ENCODE measurements at regions of chr2 and their contacts with region 1.

Region 1: DNA sequence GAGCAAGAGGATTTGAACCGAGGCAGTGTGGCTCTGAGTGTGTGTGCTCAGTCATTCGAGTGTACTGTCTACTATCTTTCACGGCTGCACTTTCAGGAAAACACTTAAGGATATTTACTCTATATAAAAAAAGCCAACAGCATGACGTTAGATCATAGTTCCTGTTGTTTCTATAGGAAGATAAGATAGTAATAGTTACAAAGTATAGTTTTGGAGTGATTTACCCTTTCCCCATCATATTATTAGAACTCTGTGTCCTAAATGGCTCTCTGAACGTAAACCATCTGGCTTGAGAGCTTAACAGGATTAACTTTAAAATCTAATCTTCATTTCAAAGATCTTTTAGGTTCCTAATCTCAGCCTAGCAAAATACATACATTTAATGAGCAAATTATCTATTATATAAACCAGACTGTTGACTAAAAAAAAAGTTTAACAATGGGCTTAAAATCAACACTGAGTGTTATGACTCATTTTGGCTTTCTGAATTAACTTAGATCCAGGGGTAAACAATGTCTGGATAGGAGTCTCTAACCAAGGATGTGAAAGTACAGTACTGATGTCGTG is 150.3 kb upstream of the DNMT3A start:
- DNase-seq: no peak
- H3K4me3 Mint-ChIP-seq: no peak overlapping the region
- H3K27ac Mint-ChIP-seq: no peak overlapping the region
- H3K4me1 Mint-ChIP-seq: peaks cover 12% of the 10 kb centered on the region
- H3K27me3 Mint-ChIP-seq: no peaks in the 10 kb centered on the region

Region 2: GRCh38 chr2:25349397-25349796 is 142.7 kb before region 1 on chr2:
- intact Hi-C with region 1: no loop called
- DNase-seq: no peak
- H3K4me3 Mint-ChIP-seq: no peak overlapping the region
- H3K27ac Mint-ChIP-seq: no peak overlapping the region
- H3K4me1 Mint-ChIP-seq: peaks cover 29% of the 10 kb centered on the region
- H3K27me3 Mint-ChIP-seq: peaks cover 4% of the 10 kb centered on the region

Region 3: GRCh38 chr2:25453199-25453905 is 38.7 kb before region 1 on chr2:
- intact Hi-C with region 1: loop called (anchors 5 kb)
- DNase-seq: peak; percentile 82
- H3K4me3 Mint-ChIP-seq: peak overlapping the region; percentile 57
- H3K27ac Mint-ChIP-seq: peak overlapping the region; percentile 91
- H3K4me1 Mint-ChIP-seq: peaks cover 21% of the 10 kb centered on the region
- H3K27me3 Mint-ChIP-seq: no peaks in the 10 kb centered on the region

Region 4: GRCh38 chr2:25649781-25650180 is 157.7 kb after region 1 on chr2:
- intact Hi-C with region 1: no loop called
- DNase-seq: no peak
- H3K4me3 Mint-ChIP-seq: no peak overlapping the region
- H3K27ac Mint-ChIP-seq: no peak overlapping the region
- H3K4me1 Mint-ChIP-seq: no peaks in the 10 kb centered on the region
- H3K27me3 Mint-ChIP-seq: no peaks in the 10 kb centered on the region